ENCODE measurements at regions of chr9 and their contacts with region 1.

Region 1: GRCh38 chr9:137240861-137241489 is at the start of gene TUBB4B:
- DNase-seq: peak; percentile 97 to 100 (median 99)

Region 2: GRCh38 chr9:137254624-137255447 is 13.9 kb after region 1 on chr9 and contains the start of gene NELFB:
- intact Hi-C with region 1: loop called (anchors 2 kb)
- DNase-seq: peak; percentile 74 to 99 (median 96)